ENCODE measurements at regions of chrX and their contacts with region 1.

Region 1: DNA sequence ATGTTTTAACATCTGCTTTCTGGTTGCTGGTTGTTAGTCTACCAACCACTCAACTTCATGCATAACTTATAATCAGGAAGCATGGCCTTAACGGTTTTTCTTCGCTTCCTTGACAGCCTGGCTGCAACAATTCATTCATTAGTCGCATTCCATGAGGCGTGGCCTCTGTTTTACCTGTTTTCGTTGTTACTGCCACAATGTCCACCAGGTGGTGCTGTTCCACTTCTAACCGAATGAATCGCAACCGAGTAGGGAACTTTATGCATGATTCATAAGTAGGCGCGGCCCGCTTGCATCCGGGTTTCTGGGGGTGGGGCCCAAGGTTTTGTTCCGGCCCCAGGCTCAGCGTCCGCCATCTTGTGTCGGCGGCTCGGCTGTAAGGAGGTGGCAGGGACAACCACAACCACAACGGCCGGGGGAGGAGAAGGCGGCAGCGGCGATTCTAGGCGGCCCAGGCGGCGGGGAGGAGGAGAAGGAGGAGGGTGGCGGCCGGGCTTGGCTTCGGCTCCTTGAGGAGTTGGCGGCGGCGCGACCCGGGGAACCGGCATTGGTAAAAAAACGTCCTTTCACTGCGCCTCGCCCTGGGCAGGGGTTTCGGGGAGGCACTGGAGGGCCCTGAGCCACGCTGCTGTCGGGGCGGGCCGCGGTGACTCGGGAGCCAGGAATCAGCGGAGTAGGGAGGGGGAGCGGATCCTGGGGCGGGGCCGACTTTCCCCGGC is at the start of gene UBA1:
- DNase-seq: peak; percentile 92 to 94
- H3K4me3 ChIP-seq: peak within 1 kb of the TSS in 2 of 3 donors; percentile 29 to 85
- H3K27ac ChIP-seq: peak within 1 kb of the TSS; percentile 90 to 97 (median 93)
- H3K4me1 ChIP-seq: peaks cover 43 to 52% of the 10 kb centered on the region in 2 donors
- H3K27me3 ChIP-seq: no peaks in the 10 kb centered on the region
- CTCF ChIP-seq: peak; percentile 30 to 96 (median 68)
- POLR2A ChIP-seq: peak; percentile 45 to 90
- total RNA-seq, gene UBA1: 159 to 293 (median 201) TPM

Region 2: GRCh38 chrX:47093248-47093647 is 100.4 kb before region 1 on chrX:
- intact Hi-C with region 1: no loop called
- DNase-seq: no peak
- H3K4me3 ChIP-seq: no peak overlapping the region
- H3K27ac ChIP-seq: no peak overlapping the region
- H3K4me1 ChIP-seq: peaks cover 0 to 16% of the 10 kb centered on the region in 2 donors
- H3K27me3 ChIP-seq: no peaks in the 10 kb centered on the region
- CTCF ChIP-seq: peak in 4 of 6 experiments; percentile 33 to 56 (median 46)
- POLR2A ChIP-seq: no peak

Region 3: GRCh38 chrX:47384502-47384901 is 190.9 kb after region 1 on chrX:
- intact Hi-C with region 1: loop called (anchors 5 kb)
- DNase-seq: peak; percentile 49 to 64
- H3K4me3 ChIP-seq: no peak overlapping the region
- H3K27ac ChIP-seq: no peak overlapping the region
- H3K4me1 ChIP-seq: no peaks in the 10 kb centered on the region
- H3K27me3 ChIP-seq: no peaks in the 10 kb centered on the region
- CTCF ChIP-seq: peak; percentile 36 to 65 (median 56)
- POLR2A ChIP-seq: no peak

Region 4: DNA sequence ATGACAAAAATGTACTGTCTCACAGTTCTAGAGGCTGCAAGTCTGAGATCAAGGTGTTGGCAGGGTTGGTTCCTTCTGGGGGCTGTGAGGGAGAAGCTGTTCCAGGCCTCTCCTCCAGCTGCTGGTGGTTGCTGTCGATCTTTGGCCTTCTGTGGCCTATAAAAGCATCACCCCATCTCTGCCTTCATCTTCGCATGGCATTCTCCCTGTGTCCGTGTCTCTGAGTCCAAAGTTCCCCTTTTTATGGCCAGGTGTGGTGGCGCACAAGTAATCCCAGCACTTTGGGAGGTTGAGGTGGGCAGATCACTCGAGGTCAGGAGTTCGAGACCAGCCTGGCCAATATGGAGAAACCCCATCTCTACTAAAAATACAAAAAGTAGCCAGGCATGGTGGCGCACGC is 335.9 kb after region 1 on chrX:
- intact Hi-C with region 1: loop called (anchors 5 kb)
- DNase-seq: no peak
- H3K4me3 ChIP-seq: no peak overlapping the region
- H3K27ac ChIP-seq: no peak overlapping the region
- H3K4me1 ChIP-seq: no peaks in the 10 kb centered on the region
- H3K27me3 ChIP-seq: no peaks in the 10 kb centered on the region
- CTCF ChIP-seq: no peak
- POLR2A ChIP-seq: no peak